Right lobe of liver (tissue), 6 donors: ENCODE measurements at regions of chr2 and their contacts with region 1.

Region 1: GRCh38 chr2:186641807-186642321 is 52.0 kb upstream of the FAM171B start:
- DNase-seq: no peak
- ATAC-seq: peak; percentile 93 to 95 (median 94)
- H3K4me3 ChIP-seq: no peak overlapping the region
- H3K27ac ChIP-seq: no peak overlapping the region
- H3K4me1 ChIP-seq: no peaks in the 10 kb centered on the region
- H3K27me3 ChIP-seq: no peaks in the 10 kb centered on the region
- CTCF ChIP-seq: peak; percentile 70 to 78 (median 76)
- POLR2A ChIP-seq: no peak

Region 2: DNA sequence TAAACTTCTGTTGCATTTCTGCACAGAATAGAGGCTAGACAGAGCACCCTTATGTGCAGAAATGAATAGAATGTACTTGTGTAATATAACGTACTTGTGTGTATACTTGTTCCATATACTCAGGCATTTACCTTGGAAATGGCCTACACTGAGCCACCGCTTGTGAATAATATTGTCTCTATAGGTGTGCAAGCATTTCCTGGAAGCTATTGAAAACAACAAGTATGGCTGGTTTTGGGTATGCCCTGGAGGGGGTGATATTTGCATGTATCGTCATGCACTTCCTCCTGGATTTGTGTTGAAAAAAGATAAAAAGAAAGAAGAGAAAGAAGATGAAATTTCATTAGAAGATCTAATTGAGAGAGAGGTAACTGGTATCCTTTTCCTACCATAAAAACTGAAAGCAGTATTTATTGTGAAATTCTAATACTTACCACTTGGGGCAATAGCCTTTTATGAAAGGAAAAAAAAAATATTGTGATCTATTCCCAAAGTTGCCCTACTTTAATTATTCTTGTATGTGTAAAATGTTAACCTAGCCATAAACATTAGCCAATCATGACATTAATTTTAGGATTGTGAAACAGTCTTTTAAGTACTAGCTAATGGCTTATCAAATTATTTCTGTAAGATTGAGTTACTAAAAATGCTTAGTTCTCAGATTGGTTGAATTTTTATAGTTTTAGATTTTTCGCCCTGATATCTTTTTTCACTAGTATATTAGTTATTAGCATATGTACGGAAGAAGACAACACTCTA is 137.8 kb before region 1 on chr2:
- intact Hi-C with region 1: loop called (anchors 10 kb)
- DNase-seq: no peak
- ATAC-seq: peak; percentile 41 to 88 (median 73)
- H3K4me3 ChIP-seq: no peak overlapping the region
- H3K27ac ChIP-seq: no peak overlapping the region
- H3K4me1 ChIP-seq: no peaks in the 10 kb centered on the region
- H3K27me3 ChIP-seq: no peaks in the 10 kb centered on the region
- CTCF ChIP-seq: peak; percentile 55 to 69 (median 59)
- POLR2A ChIP-seq: no peak